ENCODE measurements at regions of chr4 and their contacts with region 1.

Region 1: GRCh38 chr4:118278473-118279274 is 74.1 kb downstream of the PRSS12 start:
- DNase-seq: peak; percentile 99
- H3K4me3 ChIP-seq: peak overlapping the region; percentile 62 to 91 (median 66)
- H3K27ac ChIP-seq: peak overlapping the region; percentile 89 to 97 (median 92)
- H3K4me1 ChIP-seq: peaks cover 19 to 51% (median 38%) of the 10 kb centered on the region in 6 donors
- H3K27me3 ChIP-seq: no peaks in the 10 kb centered on the region
- CTCF ChIP-seq: peak in 1 of 11 experiments; percentile 22
- POLR2A ChIP-seq: peak; percentile 56 to 73 (median 62)

Region 2: DNA sequence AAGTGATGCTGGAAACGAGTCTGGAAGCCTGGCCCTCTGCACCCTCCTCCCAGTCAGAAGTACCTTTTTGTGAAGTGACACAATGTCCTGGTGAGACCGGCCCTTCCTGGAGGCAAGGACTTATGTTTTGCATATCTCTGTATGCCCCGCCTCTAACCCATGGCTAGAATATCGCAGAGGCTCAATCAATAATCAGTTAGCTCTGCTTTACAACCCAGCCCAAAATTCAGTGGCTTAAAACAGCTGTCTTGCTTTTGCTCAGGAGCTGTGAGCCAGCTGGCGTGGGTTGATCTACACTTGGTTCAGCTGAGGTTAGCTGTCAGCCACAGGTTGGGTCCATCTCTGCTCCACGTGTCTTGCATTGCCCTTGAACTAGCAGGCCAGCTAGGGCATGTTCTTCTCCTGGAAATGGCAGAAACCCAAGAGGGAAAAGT is 307.7 kb after region 1 on chr4:
- intact Hi-C with region 1: loop called (anchors 5 kb)
- DNase-seq: no peak
- H3K4me3 ChIP-seq: no peak overlapping the region
- H3K27ac ChIP-seq: peak overlapping the region in 2 of 8 donors; percentile 13 to 24
- H3K4me1 ChIP-seq: peaks cover 0 to 12% (median 9%) of the 10 kb centered on the region in 6 donors
- H3K27me3 ChIP-seq: peaks cover 0 to 28% (median 0%) of the 10 kb centered on the region in 7 donors
- CTCF ChIP-seq: no peak
- POLR2A ChIP-seq: no peak

Region 3: GRCh38 chr4:118684873-118685811 is 406.5 kb after region 1 on chr4 and contains the start of gene METTL14:
- intact Hi-C with region 1: loop called (anchors 5 kb)
- DNase-seq: peak; percentile 96
- H3K4me3 ChIP-seq: peak within 1 kb of the TSS; percentile 56 to 73 (median 64)
- H3K27ac ChIP-seq: peak within 1 kb of the TSS; percentile 69 to 93 (median 91)
- H3K4me1 ChIP-seq: peaks cover 12 to 33% (median 22%) of the 10 kb centered on the region in 6 donors
- H3K27me3 ChIP-seq: no peaks in the 10 kb centered on the region
- CTCF ChIP-seq: peak in 6 of 11 experiments; percentile 30 to 49 (median 36)
- POLR2A ChIP-seq: peak in 1 of 3 donors; percentile 18
- total RNA-seq, gene METTL14: 26.6 to 48.3 (median 40.4) TPM